Calu3 (cell line): ENCODE measurements at regions of chr5 and their contacts with region 1.

Region 1: DNA sequence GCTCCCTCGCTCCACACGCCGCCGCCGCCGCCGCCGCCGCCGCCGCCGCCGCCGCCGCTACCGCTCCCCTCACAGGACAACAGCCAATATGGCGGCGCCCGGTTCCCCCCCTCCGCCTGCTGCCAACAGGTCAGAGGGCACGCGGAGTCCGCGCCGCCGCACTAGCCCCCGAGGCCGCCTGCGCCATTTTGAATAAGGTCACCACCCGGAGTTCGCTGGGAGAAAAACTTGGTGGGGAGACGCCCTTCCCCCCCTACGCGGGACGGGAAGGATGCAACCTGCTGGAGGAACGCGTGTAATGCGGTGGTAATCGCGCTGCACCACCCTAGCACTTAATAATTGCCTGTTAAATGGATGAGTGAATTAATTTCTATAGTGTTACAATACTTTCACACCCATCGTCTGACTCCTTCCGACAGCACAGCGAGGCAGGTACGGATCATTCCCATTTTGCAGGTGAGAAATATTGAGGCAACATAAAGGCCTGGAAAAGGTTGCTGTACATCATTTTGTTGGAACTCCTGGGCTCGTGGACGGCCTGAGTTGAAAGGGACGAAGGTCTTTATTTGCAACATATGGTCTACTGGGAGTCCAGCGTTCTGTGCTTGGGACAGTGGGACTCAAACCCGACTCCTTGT is at the start of gene FAM193B:
- DNase-seq: peak; percentile 98
- H3K4me3 Mint-ChIP-seq: peak within 1 kb of the TSS; percentile 88
- H3K27ac Mint-ChIP-seq: peak within 1 kb of the TSS; percentile 35
- H3K4me1 Mint-ChIP-seq: peaks cover 25% of the 10 kb centered on the region
- H3K27me3 Mint-ChIP-seq: no peaks in the 10 kb centered on the region
- CTCF ChIP-seq: no peak
- total RNA-seq, gene FAM193B: 92.0 and 97.0 TPM in 2 replicates

Region 2: DNA sequence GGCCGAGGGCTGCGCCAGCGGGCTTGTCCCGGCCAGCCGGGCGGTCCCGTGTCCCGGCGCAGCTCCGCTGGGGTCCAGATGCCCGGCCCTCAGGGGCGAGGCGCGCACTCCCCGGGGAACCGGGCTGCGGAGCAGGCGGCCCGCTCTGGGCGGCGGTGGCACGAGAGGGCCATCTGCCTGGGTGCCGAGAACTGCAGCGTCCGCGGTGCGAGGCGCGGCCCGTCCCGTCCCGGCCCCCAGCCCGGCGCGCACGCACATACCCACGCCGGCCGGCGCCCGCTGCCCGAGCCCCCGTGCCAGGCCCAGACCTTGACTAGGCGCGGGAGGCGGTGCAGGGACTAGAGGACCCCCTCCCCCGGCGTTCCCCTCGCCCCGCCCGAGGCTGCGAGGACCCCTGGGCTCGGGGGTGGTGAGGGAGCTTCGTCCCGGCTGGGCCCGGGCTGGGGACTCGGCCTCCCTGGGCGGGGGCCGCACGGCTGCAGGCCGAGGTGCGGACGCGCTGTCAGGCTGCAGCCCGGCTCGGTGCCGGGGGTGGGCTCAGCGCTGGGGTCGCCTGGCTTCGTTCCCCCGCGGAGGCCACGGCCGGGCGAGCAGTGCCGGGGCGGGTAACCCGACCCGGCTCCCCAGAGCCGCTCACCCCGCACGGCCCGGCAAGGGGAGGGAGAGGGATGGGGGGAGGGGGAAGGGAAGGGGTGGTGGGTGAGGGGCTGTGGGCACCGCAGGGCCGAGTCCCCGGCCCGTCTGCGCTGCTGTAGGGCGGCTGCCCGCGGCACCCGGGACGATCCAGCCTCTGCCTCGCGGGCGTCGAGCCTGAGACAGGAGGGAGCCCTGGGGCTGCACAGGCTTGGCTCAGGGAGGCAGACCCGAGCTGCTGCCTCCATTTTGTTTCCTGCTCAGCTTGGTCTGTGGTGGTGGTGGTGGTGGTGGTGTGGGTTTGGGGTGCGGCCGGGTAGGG is 422.2 kb before region 1 on chr5:
- CTCF ChIA-PET with region 1: no interaction called
- intact Hi-C with region 1: no loop called
- DNase-seq: no peak
- H3K4me3 Mint-ChIP-seq: peak overlapping the region; percentile 91
- H3K27ac Mint-ChIP-seq: no peak overlapping the region
- H3K4me1 Mint-ChIP-seq: peaks cover 22% of the 10 kb centered on the region
- H3K27me3 Mint-ChIP-seq: no peaks in the 10 kb centered on the region
- CTCF ChIP-seq: no peak

Region 3: GRCh38 chr5:177500685-177501522 is 53.7 kb before region 1 on chr5:
- CTCF ChIA-PET with region 1: no interaction called
- intact Hi-C with region 1: no loop called
- DNase-seq: peak; percentile 97
- H3K4me3 Mint-ChIP-seq: no peak overlapping the region
- H3K27ac Mint-ChIP-seq: peak overlapping the region; percentile 47
- H3K4me1 Mint-ChIP-seq: peaks cover 22% of the 10 kb centered on the region
- H3K27me3 Mint-ChIP-seq: peaks cover 20% of the 10 kb centered on the region
- CTCF ChIP-seq: peak; percentile 98

Region 4: GRCh38 chr5:177592010-177592834 is 37.6 kb after region 1 on chr5 and contains the start of gene TMED9:
- CTCF ChIA-PET with region 1: no interaction called
- intact Hi-C with region 1: loop called (anchors 5 kb)
- DNase-seq: peak; percentile 95
- H3K4me3 Mint-ChIP-seq: peak within 1 kb of the TSS; percentile 86
- H3K27ac Mint-ChIP-seq: peak within 1 kb of the TSS; percentile 79
- H3K4me1 Mint-ChIP-seq: peaks cover 22% of the 10 kb centered on the region
- H3K27me3 Mint-ChIP-seq: peaks cover 41% of the 10 kb centered on the region
- CTCF ChIP-seq: no peak
- total RNA-seq, gene TMED9: 275 and 294 TPM in 2 replicates